Activated B cell treated with CpG ODN at 0.5 μM for 24 hours (primary cell): ENCODE measurements at regions of chr10 and their contacts with region 1.

Region 1: DNA sequence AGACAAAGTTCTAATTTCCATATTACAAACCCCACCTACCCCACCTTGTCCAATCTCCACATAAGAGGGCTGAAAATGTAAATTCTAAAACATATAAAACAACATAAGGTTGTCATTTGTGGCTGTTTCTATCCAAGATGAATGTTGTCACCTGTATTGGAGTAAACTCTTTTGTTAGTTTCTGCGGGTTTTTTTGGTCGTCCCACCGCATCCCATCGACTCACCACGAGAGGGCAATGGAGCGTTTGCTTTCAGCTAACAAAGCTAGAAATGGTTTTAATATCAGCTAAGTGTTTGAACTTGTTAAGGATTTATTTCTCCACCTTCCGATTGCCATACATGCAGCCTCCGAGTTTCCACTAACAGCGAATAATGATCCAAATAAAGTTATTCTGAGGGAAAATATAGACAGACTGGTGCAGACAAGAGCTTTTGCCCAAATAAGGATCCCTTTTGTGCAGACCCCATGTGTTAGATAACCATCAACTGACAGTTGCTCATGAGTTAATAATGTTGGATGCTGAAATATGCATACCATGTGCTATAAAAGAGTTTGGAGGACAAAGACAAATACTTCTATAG is 137.2 kb downstream of the ARID5B start:
- DNase-seq: no peak
- ATAC-seq: peak; percentile 59
- H3K4me3 Mint-ChIP-seq: peak overlapping the region; percentile 69
- H3K27ac Mint-ChIP-seq: peak overlapping the region; percentile 93
- H3K4me1 Mint-ChIP-seq: peaks cover 90% of the 10 kb centered on the region
- H3K27me3 Mint-ChIP-seq: no peaks in the 10 kb centered on the region
- CTCF ChIP-seq: no peak

Region 2: GRCh38 chr10:61896854-61897661 is 141.6 kb before region 1 on chr10:
- CTCF ChIA-PET with region 1: interaction called, 101 read pairs
- POLR2A ChIA-PET with region 1: interaction called, 589 read pairs
- intact Hi-C with region 1: loop called (anchors 1 kb)
- DNase-seq: peak; percentile 43
- ATAC-seq: peak; percentile 71
- H3K4me3 Mint-ChIP-seq: peak overlapping the region; percentile 97
- H3K27ac Mint-ChIP-seq: peak overlapping the region; percentile 98
- H3K4me1 Mint-ChIP-seq: peaks cover 37% of the 10 kb centered on the region
- H3K27me3 Mint-ChIP-seq: no peaks in the 10 kb centered on the region
- CTCF ChIP-seq: no peak

Region 3: DNA sequence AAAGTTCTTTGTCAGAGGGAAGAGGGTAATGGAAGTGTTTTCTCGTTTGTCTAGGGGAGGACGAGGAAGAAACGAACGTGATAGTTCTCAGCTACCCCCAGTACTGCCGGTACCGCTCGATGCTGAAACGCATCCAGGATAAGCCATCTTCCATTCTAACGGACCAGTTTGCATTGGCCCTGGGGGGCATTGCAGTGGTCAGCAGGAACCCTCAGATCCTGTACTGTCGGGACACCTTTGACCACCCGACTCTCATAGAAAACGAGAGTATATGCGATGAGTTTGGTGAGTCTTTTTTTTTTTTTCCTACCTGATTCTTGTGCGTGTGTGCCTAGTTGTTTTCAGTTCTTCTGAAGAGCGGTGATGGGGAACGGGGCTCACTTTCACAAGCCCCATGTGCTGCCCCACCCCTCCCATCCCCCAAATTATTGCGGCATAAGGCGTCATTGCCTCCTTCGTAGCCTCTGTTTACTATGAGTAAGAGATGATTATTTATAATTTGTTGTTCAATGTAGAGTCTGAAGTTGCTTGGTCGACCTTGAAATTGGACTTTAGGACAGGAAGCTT is 38.6 kb before region 1 on chr10:
- CTCF ChIA-PET with region 1: interaction called, 4 read pairs
- POLR2A ChIA-PET with region 1: interaction called, 32 read pairs
- intact Hi-C with region 1: loop called (anchors 2 kb)
- DNase-seq: peak; percentile 60
- ATAC-seq: peak; percentile 86
- H3K4me3 Mint-ChIP-seq: peak overlapping the region; percentile 77
- H3K27ac Mint-ChIP-seq: peak overlapping the region; percentile 100
- H3K4me1 Mint-ChIP-seq: peaks cover 95% of the 10 kb centered on the region
- H3K27me3 Mint-ChIP-seq: no peaks in the 10 kb centered on the region
- CTCF ChIP-seq: no peak

Region 4: GRCh38 chr10:62082729-62083411 is 44.2 kb after region 1 on chr10:
- CTCF ChIA-PET with region 1: interaction called, 16 read pairs
- POLR2A ChIA-PET with region 1: interaction called, 56 read pairs
- intact Hi-C with region 1: loop called (anchors 1 kb)
- DNase-seq: no peak
- ATAC-seq: peak; percentile 48
- H3K4me3 Mint-ChIP-seq: peak overlapping the region; percentile 65
- H3K27ac Mint-ChIP-seq: peak overlapping the region; percentile 96
- H3K4me1 Mint-ChIP-seq: peaks cover 86% of the 10 kb centered on the region
- H3K27me3 Mint-ChIP-seq: no peaks in the 10 kb centered on the region
- CTCF ChIP-seq: no peak

Region 5: DNA sequence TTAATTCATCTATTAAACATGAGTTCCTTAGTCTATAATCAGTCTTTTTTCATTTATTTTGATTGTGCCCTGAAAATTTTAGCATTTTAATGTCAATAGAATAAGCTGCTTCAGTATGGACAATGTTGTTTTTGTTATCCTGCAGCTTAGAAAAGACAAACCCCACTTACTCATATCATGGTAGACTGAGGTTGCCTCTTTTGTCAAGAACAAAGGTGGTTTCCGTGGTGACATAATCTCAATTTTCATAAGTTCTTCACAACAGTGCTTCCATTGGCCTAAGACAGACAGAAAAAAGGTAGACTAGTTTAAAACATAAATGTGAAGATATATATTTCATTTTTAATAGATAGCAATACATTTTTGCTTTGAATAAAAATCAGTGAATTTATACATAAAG is 160.9 kb after region 1 on chr10:
- CTCF ChIA-PET with region 1: interaction called, 4 read pairs
- POLR2A ChIA-PET with region 1: no interaction called
- intact Hi-C with region 1: loop called (anchors 2 kb)
- DNase-seq: no peak
- ATAC-seq: no peak
- H3K4me3 Mint-ChIP-seq: no peak overlapping the region
- H3K27ac Mint-ChIP-seq: no peak overlapping the region
- H3K4me1 Mint-ChIP-seq: peaks cover 16% of the 10 kb centered on the region
- H3K27me3 Mint-ChIP-seq: no peaks in the 10 kb centered on the region
- CTCF ChIP-seq: no peak

Region 6: GRCh38 chr10:62545160-62546066 is 506.7 kb after region 1 on chr10:
- CTCF ChIA-PET with region 1: no interaction called
- POLR2A ChIA-PET with region 1: no interaction called
- intact Hi-C with region 1: no loop called
- DNase-seq: no peak
- ATAC-seq: no peak
- H3K4me3 Mint-ChIP-seq: no peak overlapping the region
- H3K27ac Mint-ChIP-seq: no peak overlapping the region
- H3K4me1 Mint-ChIP-seq: peaks cover 50% of the 10 kb centered on the region
- H3K27me3 Mint-ChIP-seq: no peaks in the 10 kb centered on the region
- CTCF ChIP-seq: no peak

Region 7: DNA sequence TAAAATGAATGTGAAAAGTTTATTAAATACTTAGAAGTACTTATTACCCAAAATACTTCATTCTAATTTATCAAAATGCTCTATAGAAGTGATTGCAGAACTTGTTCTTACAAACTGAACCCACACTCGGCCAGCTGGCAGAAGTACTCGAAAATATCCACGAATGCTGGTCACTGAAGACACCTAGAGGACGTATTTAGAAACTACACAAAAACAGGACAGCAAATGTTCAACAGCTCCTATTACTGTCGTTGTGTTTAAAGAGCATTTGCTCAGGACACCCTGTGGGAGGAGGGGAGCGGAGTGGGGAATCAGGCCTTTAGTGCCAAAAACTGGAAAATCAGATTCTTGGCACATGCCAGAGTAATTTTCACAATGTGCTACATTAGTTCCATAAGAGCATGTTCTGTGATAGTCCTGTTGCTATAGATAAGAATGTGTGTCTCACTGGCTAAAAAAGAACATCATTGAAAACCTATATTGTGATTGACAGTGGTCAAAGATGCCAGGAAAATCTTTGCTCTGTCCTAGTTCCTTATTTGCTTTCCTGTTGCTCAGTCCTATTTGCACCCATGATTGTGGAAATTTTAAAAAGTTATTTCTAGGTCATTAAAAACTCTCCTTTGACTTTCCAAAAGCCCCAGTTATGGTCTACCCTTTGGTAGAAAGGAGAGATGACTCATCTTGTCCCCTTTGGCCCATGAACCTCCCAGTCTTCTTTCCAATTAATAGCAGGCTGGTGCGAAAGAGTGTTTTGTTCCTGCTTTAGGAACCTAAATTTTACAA is 1045.4 kb after region 1 on chr10:
- CTCF ChIA-PET with region 1: interaction called, 3 read pairs
- POLR2A ChIA-PET with region 1: no interaction called
- intact Hi-C with region 1: loop called (anchors 1 kb)
- DNase-seq: no peak
- ATAC-seq: peak; percentile 77
- H3K4me3 Mint-ChIP-seq: no peak overlapping the region
- H3K27ac Mint-ChIP-seq: no peak overlapping the region
- H3K4me1 Mint-ChIP-seq: no peaks in the 10 kb centered on the region
- H3K27me3 Mint-ChIP-seq: peaks cover 9% of the 10 kb centered on the region
- CTCF ChIP-seq: peak; percentile 53